ENCODE measurements at regions of chr6 and their contacts with region 1.

Region 1: DNA sequence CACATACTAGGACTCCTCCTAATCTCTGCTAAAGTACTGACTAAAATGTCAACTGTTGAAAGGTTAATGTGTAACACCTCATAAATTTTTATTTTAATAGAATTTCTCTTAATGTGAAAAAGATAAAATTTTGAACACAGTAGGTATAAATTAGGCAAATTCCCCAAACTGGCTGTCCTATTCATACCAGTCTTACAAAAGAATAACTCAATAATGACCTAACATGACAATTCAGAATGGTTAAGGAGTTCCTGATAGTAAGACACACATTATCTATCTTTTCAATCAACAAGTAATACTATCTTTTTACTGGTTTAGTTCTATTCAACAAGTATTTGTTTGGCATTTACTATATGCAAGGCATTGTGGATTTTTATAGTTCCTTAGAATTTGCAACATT is 141.1 kb downstream of the EPHA7 start:
- DNase-seq: no peak
- H3K4me3 ChIP-seq: no peak overlapping the region
- H3K27ac ChIP-seq: no peak overlapping the region
- H3K4me1 ChIP-seq: no peaks in the 10 kb centered on the region
- H3K27me3 ChIP-seq: no peaks in the 10 kb centered on the region
- CTCF ChIP-seq: no peak
- EP300 ChIP-seq: no peak
- POLR2A ChIP-seq: no peak

Region 2: DNA sequence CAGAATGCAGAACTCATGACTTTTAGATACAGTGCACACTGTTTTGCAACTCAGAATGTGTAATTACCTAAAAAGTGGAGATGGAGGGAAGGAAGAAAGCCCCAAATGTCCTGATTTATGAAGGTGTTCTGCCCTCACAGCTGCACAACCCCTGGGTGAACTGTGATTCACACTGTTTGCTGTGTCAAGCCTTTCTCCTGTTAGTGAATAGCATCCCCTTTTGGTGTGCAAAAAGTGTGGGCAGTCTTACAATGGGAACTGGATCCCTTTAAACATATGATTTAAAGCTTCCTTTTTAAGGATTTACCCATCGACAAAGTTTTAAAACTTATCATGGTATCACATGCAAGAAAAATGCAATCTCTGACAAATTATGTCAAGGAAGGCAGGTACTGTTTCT is 774.5 kb after region 1 on chr6:
- in situ Hi-C with region 1: no loop called
- intact Hi-C with region 1: loop called (anchors 5 kb)
- DNase-seq: no peak
- H3K4me3 ChIP-seq: no peak overlapping the region
- H3K27ac ChIP-seq: no peak overlapping the region
- H3K4me1 ChIP-seq: peaks cover 0 to 10% (median 0%) of the 10 kb centered on the region in 4 donors
- H3K27me3 ChIP-seq: no peaks in the 10 kb centered on the region
- CTCF ChIP-seq: peak in 3 of 5 experiments; percentile 18 to 22 (median 21)
- EP300 ChIP-seq: no peak
- POLR2A ChIP-seq: no peak